PC-3 (cell line): ENCODE measurements at regions of chr15 and their contacts with region 1.

Region 1: GRCh38 chr15:92979011-92979701 is 79.0 kb downstream of the CHD2 start:
- DNase-seq: peak; percentile 80
- ATAC-seq: peak; percentile 66
- H3K4me3 ChIP-seq: peak overlapping the region; percentile 17; the same call in 1 of the 2 replicates
- H3K27ac ChIP-seq: peak overlapping the region; percentile 98
- H3K4me1 ChIP-seq: peaks cover 44% of the 10 kb centered on the region
- H3K27me3 ChIP-seq: no peaks in the 10 kb centered on the region
- CTCF ChIP-seq: no peak

Region 2: DNA sequence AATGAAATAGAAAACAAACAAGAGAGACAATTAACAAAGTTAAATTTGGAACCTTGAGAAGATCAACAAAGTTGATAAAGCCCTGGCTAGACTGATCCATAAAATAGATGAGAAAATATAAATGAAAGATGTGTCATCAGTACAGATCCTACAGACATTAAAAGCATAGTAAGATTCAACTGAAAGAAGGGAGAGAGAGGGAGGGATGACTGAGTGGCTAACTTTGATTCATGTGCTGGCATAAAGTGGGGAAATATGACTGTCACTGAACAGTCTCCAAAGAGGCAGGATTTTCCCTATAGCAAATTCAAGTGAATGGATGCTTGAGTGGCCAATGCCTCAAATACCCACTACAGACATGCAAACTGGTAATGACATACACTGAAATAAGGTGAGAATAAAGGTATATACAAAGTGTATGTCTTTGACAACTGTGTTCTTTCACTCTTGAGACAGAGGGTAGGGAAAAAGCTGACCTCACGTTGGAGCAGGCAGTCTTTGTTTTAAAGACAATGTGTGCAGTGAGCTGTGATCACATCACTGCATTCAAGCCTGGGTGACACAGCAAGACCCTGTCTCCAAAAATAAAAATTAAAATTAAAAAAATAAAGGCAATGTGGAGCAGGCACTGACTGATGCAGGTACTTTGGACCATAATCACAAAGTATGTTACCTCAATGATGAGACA is 114.9 kb before region 1 on chr15:
- CTCF ChIA-PET with region 1: no interaction called
- POLR2A ChIA-PET with region 1: no interaction called
- intact Hi-C with region 1: no loop called
- DNase-seq: no peak
- ATAC-seq: no peak
- H3K4me3 ChIP-seq: no peak overlapping the region
- H3K27ac ChIP-seq: no peak overlapping the region
- H3K4me1 ChIP-seq: peaks cover 4% of the 10 kb centered on the region; the same call in 1 of the 2 replicates
- H3K27me3 ChIP-seq: no peaks in the 10 kb centered on the region
- CTCF ChIP-seq: no peak

Region 3: DNA sequence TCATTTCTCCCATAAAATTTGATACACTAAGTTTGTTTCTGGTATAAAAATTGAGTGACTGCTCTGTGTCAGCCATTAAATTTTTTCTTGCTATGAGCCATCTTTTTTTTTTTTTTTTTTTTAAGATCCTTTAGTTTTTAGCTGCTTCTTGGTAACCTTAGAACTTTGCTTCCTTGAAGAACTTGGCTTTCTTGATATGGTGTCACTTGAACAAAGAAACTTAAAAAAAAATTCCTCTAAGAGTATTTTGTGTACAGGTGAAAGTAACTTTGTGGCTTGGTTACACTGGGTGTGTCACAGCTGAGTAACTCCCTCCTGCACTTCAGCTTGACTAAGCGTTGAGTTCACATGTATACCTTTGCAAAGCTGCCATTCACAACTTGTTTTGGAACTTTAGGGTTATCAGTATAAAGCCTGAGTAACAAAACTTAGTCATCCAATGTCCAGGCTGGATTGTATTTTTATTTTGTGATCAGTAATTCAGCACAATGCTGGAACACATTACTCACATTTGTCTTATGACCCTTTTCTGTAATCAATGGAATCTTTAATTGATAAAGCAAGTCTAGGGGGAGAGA is 72.5 kb before region 1 on chr15:
- CTCF ChIA-PET with region 1: no interaction called
- POLR2A ChIA-PET with region 1: no interaction called
- intact Hi-C with region 1: loop called (anchors 5 kb)
- DNase-seq: peak; percentile 94
- ATAC-seq: peak; percentile 48
- H3K4me3 ChIP-seq: peak overlapping the region; percentile 78
- H3K27ac ChIP-seq: peak overlapping the region; percentile 92
- H3K4me1 ChIP-seq: peaks cover 59% of the 10 kb centered on the region
- H3K27me3 ChIP-seq: no peaks in the 10 kb centered on the region
- CTCF ChIP-seq: no peak

Region 4: GRCh38 chr15:92947071-92947730 is 32.0 kb before region 1 on chr15:
- CTCF ChIA-PET with region 1: no interaction called
- POLR2A ChIA-PET with region 1: no interaction called
- intact Hi-C with region 1: no loop called
- DNase-seq: no peak
- ATAC-seq: no peak
- H3K4me3 ChIP-seq: no peak overlapping the region
- H3K27ac ChIP-seq: no peak overlapping the region
- H3K4me1 ChIP-seq: no peaks in the 10 kb centered on the region
- H3K27me3 ChIP-seq: no peaks in the 10 kb centered on the region
- CTCF ChIP-seq: no peak

Region 5: GRCh38 chr15:92958105-92958504 is 21.1 kb before region 1 on chr15:
- CTCF ChIA-PET with region 1: no interaction called
- POLR2A ChIA-PET with region 1: no interaction called
- intact Hi-C with region 1: no loop called
- DNase-seq: no peak
- ATAC-seq: no peak
- H3K4me3 ChIP-seq: no peak overlapping the region
- H3K27ac ChIP-seq: no peak overlapping the region
- H3K4me1 ChIP-seq: no peaks in the 10 kb centered on the region
- H3K27me3 ChIP-seq: no peaks in the 10 kb centered on the region
- CTCF ChIP-seq: no peak

Region 6: GRCh38 chr15:93044301-93045190 is 65.4 kb after region 1 on chr15:
- CTCF ChIA-PET with region 1: no interaction called
- POLR2A ChIA-PET with region 1: interaction called, 10 read pairs
- intact Hi-C with region 1: no loop called
- DNase-seq: no peak
- ATAC-seq: no peak
- H3K4me3 ChIP-seq: no peak overlapping the region
- H3K27ac ChIP-seq: no peak overlapping the region
- H3K4me1 ChIP-seq: no peaks in the 10 kb centered on the region
- H3K27me3 ChIP-seq: no peaks in the 10 kb centered on the region
- CTCF ChIP-seq: no peak

Region 7: GRCh38 chr15:93250950-93251349 is 271.8 kb after region 1 on chr15:
- CTCF ChIA-PET with region 1: no interaction called
- POLR2A ChIA-PET with region 1: no interaction called
- intact Hi-C with region 1: no loop called
- DNase-seq: no peak
- ATAC-seq: no peak
- H3K4me3 ChIP-seq: no peak overlapping the region
- H3K27ac ChIP-seq: no peak overlapping the region
- H3K4me1 ChIP-seq: no peaks in the 10 kb centered on the region
- H3K27me3 ChIP-seq: peaks cover 81% of the 10 kb centered on the region
- CTCF ChIP-seq: no peak